H1 (cell line): ENCODE measurements at regions of chr17 and their contacts with region 1.

Region 1: GRCh38 chr17:34361478-34362061 is 1.5 kb downstream of the CCL1 start:
- DNase-seq: peak; percentile 85 to 95
- H3K4me3 ChIP-seq: no peak overlapping the region
- H3K27ac ChIP-seq: no peak overlapping the region
- H3K4me1 ChIP-seq: no peaks in the 10 kb centered on the region
- H3K27me3 ChIP-seq: no peaks in the 10 kb centered on the region
- CTCF ChIP-seq: peak; percentile 97 to 100 (median 100)
- EP300 ChIP-seq: no peak
- POLR2A ChIP-seq: no peak
- RAD21 ChIP-seq: peak; percentile 100

Region 2: GRCh38 chr17:34146440-34147043 is 215.0 kb before region 1 on chr17:
- CTCF ChIA-PET with region 1: interaction called, 17 read pairs
- POLR2A ChIA-PET with region 1: no interaction called
- DNase-seq: peak in 1 of 2 experiments; percentile 90
- H3K4me3 ChIP-seq: no peak overlapping the region
- H3K27ac ChIP-seq: no peak overlapping the region
- H3K4me1 ChIP-seq: peaks cover 0 to 4% (median 0%) of the 10 kb centered on the region in 4 experiments; a peak in 3 of 7 replicates
- H3K27me3 ChIP-seq: no peaks in the 10 kb centered on the region
- CTCF ChIP-seq: peak; percentile 93 to 99 (median 97)
- EP300 ChIP-seq: no peak
- POLR2A ChIP-seq: no peak
- RAD21 ChIP-seq: peak; percentile 93 to 96

Region 3: GRCh38 chr17:34171245-34171818 is 190.2 kb before region 1 on chr17:
- CTCF ChIA-PET with region 1: interaction called, 65 read pairs
- POLR2A ChIA-PET with region 1: interaction called, 3 read pairs
- DNase-seq: peak in 1 of 2 experiments; percentile 82
- H3K4me3 ChIP-seq: no peak overlapping the region
- H3K27ac ChIP-seq: no peak overlapping the region
- H3K4me1 ChIP-seq: no peaks in the 10 kb centered on the region
- H3K27me3 ChIP-seq: no peaks in the 10 kb centered on the region
- CTCF ChIP-seq: peak; percentile 69 to 90 (median 80)
- EP300 ChIP-seq: no peak
- POLR2A ChIP-seq: no peak
- RAD21 ChIP-seq: peak; percentile 49 to 69

Region 4: DNA sequence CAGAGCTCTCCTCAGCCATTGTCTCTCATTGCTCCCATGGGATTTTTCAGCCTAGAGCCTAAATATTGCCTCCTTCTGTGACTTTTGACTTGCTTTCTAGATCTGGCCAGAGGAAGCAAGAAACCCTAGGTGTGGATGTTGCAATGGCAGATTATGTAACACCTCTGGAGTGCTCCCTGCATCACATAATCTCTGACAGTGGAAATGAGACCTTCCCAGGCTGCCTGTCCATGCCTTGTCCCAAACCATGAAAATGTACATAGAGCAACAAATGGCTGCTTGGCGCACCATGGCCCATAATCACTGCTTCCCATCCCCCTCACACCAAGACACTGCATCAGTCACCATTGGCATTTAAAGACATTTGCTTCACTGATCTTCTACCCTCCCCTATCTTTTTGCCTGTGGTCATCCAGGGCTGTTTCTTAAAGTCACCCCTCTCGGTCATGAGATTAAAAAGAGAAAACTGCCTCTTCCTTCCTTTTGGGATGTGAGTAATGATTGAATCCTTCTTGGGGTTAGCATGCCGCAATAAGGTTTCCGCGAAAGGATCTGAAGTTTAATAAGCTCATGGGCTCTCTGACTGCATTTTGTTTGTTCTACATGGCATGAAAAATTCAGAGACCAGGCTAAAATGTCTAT is 140.7 kb before region 1 on chr17:
- CTCF ChIA-PET with region 1: interaction called, 13 read pairs
- POLR2A ChIA-PET with region 1: no interaction called
- DNase-seq: no peak
- H3K4me3 ChIP-seq: no peak overlapping the region
- H3K27ac ChIP-seq: no peak overlapping the region
- H3K4me1 ChIP-seq: no peaks in the 10 kb centered on the region
- H3K27me3 ChIP-seq: no peaks in the 10 kb centered on the region
- CTCF ChIP-seq: no peak
- EP300 ChIP-seq: no peak
- POLR2A ChIP-seq: no peak
- RAD21 ChIP-seq: no peak

Region 5: DNA sequence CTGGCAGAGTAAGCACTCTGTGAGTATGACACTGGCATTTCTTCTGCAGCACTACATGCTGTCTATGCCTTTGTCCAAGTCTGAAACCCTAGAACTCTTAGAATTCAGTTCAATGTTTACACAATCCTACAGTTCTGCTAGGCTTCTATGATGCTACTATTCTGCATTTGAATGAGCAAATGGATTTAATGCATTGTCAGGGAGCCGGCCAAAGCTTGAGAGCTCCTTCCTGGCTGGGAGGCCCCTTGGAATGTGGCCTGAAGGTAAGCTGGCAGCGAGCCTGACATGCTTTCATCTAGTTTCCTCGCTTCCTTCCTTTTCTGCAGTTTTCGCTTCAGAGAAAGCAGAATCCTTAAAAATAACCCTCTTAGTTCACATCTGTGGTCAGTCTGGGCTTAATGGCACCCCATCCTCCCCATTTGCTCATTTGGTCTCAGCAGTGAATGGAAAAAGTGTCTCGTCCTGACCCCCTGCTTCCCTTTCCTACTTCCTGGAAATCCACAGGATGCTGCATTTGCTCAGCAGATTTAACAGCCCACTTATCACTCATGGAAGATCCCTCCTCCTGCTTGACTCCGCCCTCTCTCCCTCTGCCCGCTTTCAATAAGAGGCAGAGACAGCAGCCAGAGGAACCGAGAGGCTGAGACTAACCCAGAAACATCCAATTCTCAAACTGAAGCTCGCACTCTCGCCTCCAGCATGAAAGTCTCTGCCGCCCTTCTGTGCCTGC is 106.8 kb before region 1 on chr17 and contains the start of gene CCL2:
- CTCF ChIA-PET with region 1: interaction called, 22 read pairs
- POLR2A ChIA-PET with region 1: no interaction called
- DNase-seq: peak; percentile 46 to 56
- H3K4me3 ChIP-seq: peak within 1 kb of the TSS; percentile 25 to 53 (median 44); a peak in 7 of 8 replicates
- H3K27ac ChIP-seq: peak within 1 kb of the TSS; percentile 32; the same call in 1 of the 2 replicates
- H3K4me1 ChIP-seq: peaks cover 4 to 11% (median 7%) of the 10 kb centered on the region in 4 experiments; a peak in 6 of 7 replicates
- H3K27me3 ChIP-seq: no peaks in the 10 kb centered on the region
- CTCF ChIP-seq: no peak
- EP300 ChIP-seq: no peak
- POLR2A ChIP-seq: no peak
- RAD21 ChIP-seq: no peak
- total RNA-seq, gene CCL2: 3.1 and 3.7 TPM in 2 replicates

Region 6: DNA sequence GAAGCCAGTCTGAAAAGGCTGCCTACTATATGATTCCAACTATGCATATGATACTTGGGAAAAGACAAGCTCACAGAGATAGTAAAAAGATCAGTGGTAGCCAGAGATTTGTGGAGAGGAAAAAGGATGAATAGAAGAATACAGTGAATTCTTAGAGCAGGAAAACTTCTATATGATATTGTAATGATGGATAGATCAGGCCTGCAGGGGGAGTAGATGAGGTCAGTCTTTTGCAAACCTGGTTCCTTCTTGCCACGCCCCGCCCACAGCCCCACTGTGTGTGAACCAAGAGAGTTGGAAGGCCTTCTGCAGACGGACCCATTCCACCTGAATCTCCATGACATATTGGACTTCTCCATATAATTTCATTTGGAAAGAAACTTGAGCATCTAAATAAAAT is 43.1 kb before region 1 on chr17:
- CTCF ChIA-PET with region 1: interaction called, 87 read pairs
- POLR2A ChIA-PET with region 1: no interaction called
- DNase-seq: peak in 1 of 2 experiments; percentile 56
- H3K4me3 ChIP-seq: no peak overlapping the region
- H3K27ac ChIP-seq: no peak overlapping the region
- H3K4me1 ChIP-seq: no peaks in the 10 kb centered on the region
- H3K27me3 ChIP-seq: no peaks in the 10 kb centered on the region
- CTCF ChIP-seq: peak; percentile 7 to 43 (median 39); a peak in 3 of 4 replicates
- EP300 ChIP-seq: no peak
- POLR2A ChIP-seq: no peak
- RAD21 ChIP-seq: peak; percentile 12 to 30; a peak in 3 of 4 replicates

Region 7: GRCh38 chr17:34393401-34393800 is 31.8 kb after region 1 on chr17:
- CTCF ChIA-PET with region 1: interaction called, 30 read pairs
- POLR2A ChIA-PET with region 1: no interaction called
- DNase-seq: no peak
- H3K4me3 ChIP-seq: no peak overlapping the region
- H3K27ac ChIP-seq: no peak overlapping the region
- H3K4me1 ChIP-seq: peaks cover 0 to 2% (median 0%) of the 10 kb centered on the region in 4 experiments; a peak in 2 of 7 replicates
- H3K27me3 ChIP-seq: no peaks in the 10 kb centered on the region; a peak in 1 of 7 replicates
- CTCF ChIP-seq: no peak
- EP300 ChIP-seq: no peak
- POLR2A ChIP-seq: no peak
- RAD21 ChIP-seq: no peak

Region 8: GRCh38 chr17:34527908-34528470 is 166.4 kb after region 1 on chr17:
- CTCF ChIA-PET with region 1: no interaction called
- POLR2A ChIA-PET with region 1: no interaction called
- DNase-seq: peak in 1 of 2 experiments; percentile 67
- H3K4me3 ChIP-seq: no peak overlapping the region
- H3K27ac ChIP-seq: no peak overlapping the region
- H3K4me1 ChIP-seq: peaks cover 0 to 3% (median 0%) of the 10 kb centered on the region in 4 experiments; a peak in 1 of 7 replicates
- H3K27me3 ChIP-seq: no peaks in the 10 kb centered on the region; a peak in 1 of 7 replicates
- CTCF ChIP-seq: peak; percentile 71 to 81 (median 74)
- EP300 ChIP-seq: no peak
- POLR2A ChIP-seq: no peak
- RAD21 ChIP-seq: peak; percentile 47 to 60; a peak in 3 of 4 replicates